Endothelial cell of umbilical vein (primary cell): ENCODE measurements at regions of chr2 and their contacts with region 1.

Region 1: DNA sequence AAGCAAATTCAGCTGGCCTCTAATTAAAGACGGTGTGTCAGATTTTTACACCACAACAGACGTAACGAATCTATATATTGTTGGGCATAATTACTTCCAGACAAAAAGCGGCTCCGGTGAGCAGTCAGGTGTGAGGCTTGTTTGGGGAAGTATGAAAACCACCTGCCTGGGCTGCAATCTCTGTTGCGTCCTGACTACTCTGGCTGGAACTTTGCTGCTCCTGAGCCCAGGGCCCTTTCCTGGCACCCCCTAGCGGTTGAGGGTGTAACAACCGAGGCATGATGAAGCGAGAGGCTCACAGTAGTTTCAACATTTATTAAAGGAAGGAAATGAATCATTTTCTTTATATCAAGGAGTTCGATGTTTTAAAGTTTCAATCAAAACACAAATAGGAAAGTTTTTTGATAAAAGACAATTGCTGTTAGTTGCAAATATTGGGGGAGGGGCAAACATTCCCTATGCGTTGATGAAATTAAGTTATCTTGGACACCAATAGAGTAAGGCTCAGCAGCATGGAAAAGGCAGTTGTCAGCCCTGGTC is 10.6 kb upstream of the ITGB6 start:
- DNase-seq: peak; percentile 92
- H3K4me3 ChIP-seq: no peak overlapping the region
- H3K27ac ChIP-seq: peak overlapping the region; percentile 91
- H3K4me1 ChIP-seq: peaks cover 60% of the 10 kb centered on the region
- H3K27me3 ChIP-seq: no peaks in the 10 kb centered on the region
- CTCF ChIP-seq: peak; percentile 84 to 98
- POLR2A ChIP-seq: no peak

Region 2: GRCh38 chr2:159933727-159934049 is 277.0 kb before region 1 on chr2:
- CTCF ChIA-PET with region 1: no interaction called
- POLR2A ChIA-PET with region 1: no interaction called
- dilution Hi-C with region 1: no loop called
- intact Hi-C with region 1: no loop called
- DNase-seq: no peak
- H3K4me3 ChIP-seq: no peak overlapping the region
- H3K27ac ChIP-seq: no peak overlapping the region
- H3K4me1 ChIP-seq: no peaks in the 10 kb centered on the region
- H3K27me3 ChIP-seq: no peaks in the 10 kb centered on the region
- CTCF ChIP-seq: no peak
- POLR2A ChIP-seq: no peak

Region 3: GRCh38 chr2:160157861-160158829 is 52.5 kb before region 1 on chr2:
- CTCF ChIA-PET with region 1: interaction called, 10 read pairs
- POLR2A ChIA-PET with region 1: no interaction called
- dilution Hi-C with region 1: no loop called
- intact Hi-C with region 1: loop called (anchors 1 kb)
- DNase-seq: no peak
- H3K4me3 ChIP-seq: no peak overlapping the region
- H3K27ac ChIP-seq: no peak overlapping the region
- H3K4me1 ChIP-seq: peaks cover 18% of the 10 kb centered on the region
- H3K27me3 ChIP-seq: no peaks in the 10 kb centered on the region
- CTCF ChIP-seq: no peak
- POLR2A ChIP-seq: no peak

Region 4: GRCh38 chr2:160224060-160224459 is 13.4 kb after region 1 on chr2:
- CTCF ChIA-PET with region 1: interaction called, 56 read pairs
- POLR2A ChIA-PET with region 1: interaction called, 4 read pairs
- dilution Hi-C with region 1: no loop called
- intact Hi-C with region 1: loop called (anchors 1 kb)
- DNase-seq: peak; percentile 87
- H3K4me3 ChIP-seq: peak overlapping the region in 1 of 3 experiments; percentile 41
- H3K27ac ChIP-seq: peak overlapping the region; percentile 95
- H3K4me1 ChIP-seq: peaks cover 80% of the 10 kb centered on the region
- H3K27me3 ChIP-seq: no peaks in the 10 kb centered on the region
- CTCF ChIP-seq: no peak
- POLR2A ChIP-seq: no peak

Region 5: DNA sequence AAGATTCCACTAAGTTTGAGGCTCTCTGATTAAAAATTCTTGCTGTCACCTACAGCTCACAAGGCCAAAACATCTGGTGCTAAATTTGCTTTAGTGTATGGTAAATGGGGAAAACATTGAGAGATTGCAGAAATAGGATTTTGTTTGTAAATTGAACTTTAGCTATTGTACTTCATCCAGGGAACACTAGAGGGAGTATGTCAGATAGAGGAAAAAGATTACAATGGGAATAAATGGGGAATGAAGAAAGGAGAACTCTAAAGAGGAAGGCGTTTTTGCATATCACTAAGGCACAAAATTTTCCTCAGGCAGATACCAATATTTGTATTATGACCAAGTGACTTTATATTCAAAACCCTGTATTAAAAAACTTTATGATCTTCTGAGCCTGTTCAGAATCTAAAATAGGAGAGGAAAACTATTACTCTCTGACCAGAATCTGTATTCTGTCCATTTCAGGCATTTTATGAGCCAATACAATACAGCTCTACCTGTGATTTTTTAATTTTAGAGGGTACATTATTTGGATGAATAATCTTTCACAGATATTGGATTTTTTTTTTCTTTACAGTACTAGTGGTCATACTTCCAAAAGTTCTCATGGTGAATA is 41.7 kb after region 1 on chr2:
- CTCF ChIA-PET with region 1: interaction called, 16 read pairs
- POLR2A ChIA-PET with region 1: no interaction called
- dilution Hi-C with region 1: no loop called
- intact Hi-C with region 1: no loop called
- DNase-seq: peak; percentile 58
- H3K4me3 ChIP-seq: no peak overlapping the region
- H3K27ac ChIP-seq: no peak overlapping the region
- H3K4me1 ChIP-seq: no peaks in the 10 kb centered on the region
- H3K27me3 ChIP-seq: no peaks in the 10 kb centered on the region
- CTCF ChIP-seq: peak; percentile 52 to 57
- POLR2A ChIP-seq: no peak

Region 6: GRCh38 chr2:160375802-160376469 is 165.3 kb after region 1 on chr2:
- CTCF ChIA-PET with region 1: no interaction called
- POLR2A ChIA-PET with region 1: no interaction called
- dilution Hi-C with region 1: no loop called
- intact Hi-C with region 1: loop called (anchors 5 kb)
- DNase-seq: peak; percentile 66
- H3K4me3 ChIP-seq: peak overlapping the region in 1 of 3 experiments; percentile 22
- H3K27ac ChIP-seq: peak overlapping the region; percentile 85
- H3K4me1 ChIP-seq: peaks cover 97% of the 10 kb centered on the region
- H3K27me3 ChIP-seq: no peaks in the 10 kb centered on the region
- CTCF ChIP-seq: no peak
- POLR2A ChIP-seq: peak; percentile 58

Region 7: DNA sequence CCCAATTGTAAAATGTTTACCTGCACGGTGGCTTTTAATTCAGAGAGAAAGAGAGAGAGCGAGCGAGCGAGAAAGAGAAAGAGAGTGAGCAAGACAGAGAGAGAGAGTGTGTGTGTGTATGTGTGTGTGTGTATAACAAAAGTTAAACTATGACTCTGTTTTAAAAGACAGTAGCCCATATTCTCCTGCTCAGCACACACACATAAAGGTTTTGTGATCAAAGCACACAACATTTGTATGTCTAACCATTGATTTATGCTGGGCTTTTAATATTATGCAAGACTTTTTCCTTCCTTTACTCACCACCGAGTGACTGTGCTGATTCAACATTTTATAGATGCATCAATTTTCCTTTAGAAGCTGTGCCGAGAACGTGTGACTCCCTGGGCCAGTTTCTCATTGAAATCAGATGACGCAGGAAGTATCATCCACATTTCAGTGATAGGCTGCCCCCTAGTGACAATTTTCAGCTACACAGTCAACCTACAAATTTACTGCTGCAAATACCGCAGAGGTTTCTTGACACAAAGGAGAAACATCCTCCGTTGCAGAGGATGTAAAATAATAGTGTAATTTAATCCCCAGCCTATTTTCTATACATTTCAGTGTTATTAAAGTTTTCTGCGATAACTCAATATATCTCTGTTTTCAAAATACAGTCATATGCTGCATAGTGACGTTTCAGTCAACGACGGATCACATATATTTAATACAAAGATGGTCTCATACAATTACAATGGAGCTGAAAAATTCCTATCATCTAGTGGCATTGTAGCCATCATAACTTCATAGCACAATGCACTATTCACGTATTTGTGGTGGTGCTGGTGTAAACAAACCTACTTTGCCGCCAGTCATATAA is 783.7 kb after region 1 on chr2:
- CTCF ChIA-PET with region 1: interaction called, 8 read pairs
- POLR2A ChIA-PET with region 1: no interaction called
- dilution Hi-C with region 1: no loop called
- intact Hi-C with region 1: loop called (anchors 2 kb)
- DNase-seq: peak; percentile 86
- H3K4me3 ChIP-seq: no peak overlapping the region
- H3K27ac ChIP-seq: no peak overlapping the region
- H3K4me1 ChIP-seq: peaks cover 2% of the 10 kb centered on the region
- H3K27me3 ChIP-seq: no peaks in the 10 kb centered on the region
- CTCF ChIP-seq: peak; percentile 58 to 70
- POLR2A ChIP-seq: no peak